ENCODE measurements at regions of chr2 and their contacts with region 1.

Region 1: GRCh38 chr2:152635635-152636298 is 81.5 kb downstream of the PRPF40A start:
- DNase-seq: peak; percentile 46 to 60
- ATAC-seq: peak; percentile 63 to 81; a peak in 4 of 6 replicates
- H3K4me3 ChIP-seq: no peak overlapping the region
- H3K27ac ChIP-seq: no peak overlapping the region
- H3K4me1 ChIP-seq: no peaks in the 10 kb centered on the region
- CTCF ChIP-seq: peak; percentile 89
- EP300 ChIP-seq: no peak
- POLR2A ChIP-seq: no peak
- RAD21 ChIP-seq: peak; percentile 87 to 89

Region 2: GRCh38 chr2:152036611-152037469 is 598.9 kb before region 1 on chr2:
- CTCF ChIA-PET with region 1: interaction called, 10 read pairs
- POLR2A ChIA-PET with region 1: no interaction called
- DNase-seq: peak; percentile 42 to 76
- ATAC-seq: peak; percentile 91 to 94
- H3K4me3 ChIP-seq: no peak overlapping the region
- H3K27ac ChIP-seq: no peak overlapping the region
- H3K4me1 ChIP-seq: no peaks in the 10 kb centered on the region
- CTCF ChIP-seq: peak; percentile 93
- EP300 ChIP-seq: no peak
- POLR2A ChIP-seq: no peak
- RAD21 ChIP-seq: peak; percentile 95 to 96

Region 3: DNA sequence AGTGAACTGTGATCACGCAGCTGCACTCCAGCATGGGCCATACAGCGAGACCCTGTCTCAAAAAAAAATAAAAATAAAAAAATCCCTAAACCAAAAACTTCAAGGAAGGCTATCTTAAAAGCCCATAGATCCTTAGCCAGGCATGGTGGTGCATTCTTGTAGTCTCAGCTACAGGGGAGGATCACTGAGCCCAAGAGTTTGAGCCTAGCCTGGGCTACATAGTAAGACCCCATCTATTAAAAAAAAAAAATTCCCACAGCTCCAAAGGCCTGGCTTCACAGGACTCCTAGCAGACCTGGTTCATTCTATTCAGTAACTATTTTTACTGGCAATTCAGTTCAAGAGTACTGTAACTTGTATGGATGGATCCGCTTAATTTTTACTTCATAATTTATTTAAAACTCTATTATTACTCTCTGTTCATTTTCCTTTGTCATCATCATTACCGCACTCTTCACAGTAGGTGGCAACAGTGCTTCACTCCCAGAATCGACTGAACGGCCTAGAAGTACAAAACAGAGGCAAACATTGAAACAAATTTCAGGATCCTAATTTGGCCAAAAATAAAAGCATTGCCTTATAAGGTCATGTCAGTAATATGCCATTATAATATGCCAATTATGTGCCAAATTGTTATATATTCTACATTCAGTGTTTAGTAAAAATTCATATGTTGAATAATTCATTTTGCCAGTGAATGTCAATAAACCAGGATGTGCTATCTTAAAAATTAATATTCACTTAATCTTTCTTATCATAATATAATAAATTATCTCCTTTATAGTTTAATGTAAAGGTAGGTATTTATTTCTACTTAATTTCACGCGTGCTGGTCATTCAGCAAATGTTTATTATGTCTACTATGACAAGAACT is 445.9 kb before region 1 on chr2:
- CTCF ChIA-PET with region 1: interaction called, 25 read pairs
- POLR2A ChIA-PET with region 1: no interaction called
- DNase-seq: peak; percentile 52 to 70
- ATAC-seq: peak; percentile 81 to 95; a peak in 5 of 6 replicates
- H3K4me3 ChIP-seq: no peak overlapping the region
- H3K27ac ChIP-seq: peak overlapping the region in 1 of 2 experiments; percentile 44; a peak in 3 of 6 replicates
- H3K4me1 ChIP-seq: peaks cover 3% of the 10 kb centered on the region; the same call in 1 of the 3 replicates
- CTCF ChIP-seq: peak; percentile 93
- EP300 ChIP-seq: no peak
- POLR2A ChIP-seq: no peak
- RAD21 ChIP-seq: peak; percentile 98

Region 4: GRCh38 chr2:152335010-152335725 is 300.6 kb before region 1 on chr2 and contains the start of gene FMNL2:
- CTCF ChIA-PET with region 1: interaction called, 13 read pairs
- POLR2A ChIA-PET with region 1: no interaction called
- DNase-seq: peak; percentile 66 to 85
- ATAC-seq: peak; percentile 80 to 91
- H3K4me3 ChIP-seq: peak within 1 kb of the TSS; percentile 98
- H3K27ac ChIP-seq: peak within 1 kb of the TSS; percentile 91 to 94
- H3K4me1 ChIP-seq: peaks cover 38% of the 10 kb centered on the region
- CTCF ChIP-seq: no peak
- EP300 ChIP-seq: no peak
- POLR2A ChIP-seq: peak; percentile 87
- RAD21 ChIP-seq: no peak; a peak in 1 of 5 replicates
- polyA plus RNA-seq, gene FMNL2: 33.9 and 36.5 TPM in 2 replicates

Region 5: GRCh38 chr2:152648336-152648735 is 12.6 kb after region 1 on chr2:
- CTCF ChIA-PET with region 1: interaction called, 63 read pairs
- POLR2A ChIA-PET with region 1: no interaction called
- DNase-seq: peak; percentile 5 to 17
- ATAC-seq: peak; percentile 60 to 62; a peak in 5 of 6 replicates
- H3K4me3 ChIP-seq: no peak overlapping the region
- H3K27ac ChIP-seq: no peak overlapping the region
- H3K4me1 ChIP-seq: peaks cover 15% of the 10 kb centered on the region; the same call in 2 of the 3 replicates
- CTCF ChIP-seq: no peak
- EP300 ChIP-seq: no peak
- POLR2A ChIP-seq: no peak
- RAD21 ChIP-seq: no peak

Region 6: GRCh38 chr2:154577390-154577789 is 1941.6 kb after region 1 on chr2:
- CTCF ChIA-PET with region 1: no interaction called
- POLR2A ChIA-PET with region 1: no interaction called
- DNase-seq: no peak
- ATAC-seq: no peak
- H3K4me3 ChIP-seq: no peak overlapping the region
- H3K27ac ChIP-seq: no peak overlapping the region
- H3K4me1 ChIP-seq: no peaks in the 10 kb centered on the region
- CTCF ChIP-seq: no peak
- EP300 ChIP-seq: no peak
- POLR2A ChIP-seq: no peak
- RAD21 ChIP-seq: no peak

Measured in A549 (cell line).